OCI-LY7 (cell line): ENCODE measurements at regions of chr12 and their contacts with region 1.

Region 1: GRCh38 chr12:114998118-114998749 is 314.3 kb upstream of the TBX3 start:
- DNase-seq: no peak
- H3K4me3 ChIP-seq: no peak overlapping the region
- H3K27ac ChIP-seq: no peak overlapping the region
- H3K4me1 ChIP-seq: peaks cover 47% of the 10 kb centered on the region
- CTCF ChIP-seq: no peak

Region 2: GRCh38 chr12:114982760-114983159 is 15.5 kb before region 1 on chr12:
- CTCF ChIA-PET with region 1: no interaction called
- POLR2A ChIA-PET with region 1: no interaction called
- intact Hi-C with region 1: no loop called
- DNase-seq: no peak
- H3K4me3 ChIP-seq: no peak overlapping the region
- H3K27ac ChIP-seq: no peak overlapping the region
- H3K4me1 ChIP-seq: no peaks in the 10 kb centered on the region
- CTCF ChIP-seq: no peak

Region 3: DNA sequence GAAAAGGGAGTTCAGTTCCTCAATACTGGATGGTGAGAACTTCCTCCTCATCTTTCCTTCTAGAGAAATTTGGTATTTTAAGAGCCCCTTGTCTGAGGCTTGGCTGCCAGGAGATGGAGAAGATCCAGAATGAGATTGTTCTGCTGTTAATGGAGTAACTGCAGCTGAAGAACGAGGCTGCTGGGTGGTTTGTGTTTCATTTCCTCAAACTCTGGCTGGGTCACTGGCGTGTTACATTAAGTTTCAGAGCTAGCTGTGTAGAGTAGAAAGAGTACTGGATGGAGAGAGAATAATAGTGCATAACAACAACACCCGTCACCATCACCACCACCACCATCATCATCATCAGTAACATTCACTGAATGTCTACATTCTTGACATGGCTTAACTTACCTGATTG is 10.7 kb after region 1 on chr12:
- CTCF ChIA-PET with region 1: interaction called, 3 read pairs
- POLR2A ChIA-PET with region 1: interaction called, 10 read pairs
- intact Hi-C with region 1: no loop called
- DNase-seq: peak; percentile 85
- H3K4me3 ChIP-seq: peak overlapping the region; percentile 31
- H3K27ac ChIP-seq: peak overlapping the region; percentile 64
- H3K4me1 ChIP-seq: peaks cover 45% of the 10 kb centered on the region
- CTCF ChIP-seq: no peak

Region 4: GRCh38 chr12:115096588-115097397 is 98.6 kb after region 1 on chr12:
- CTCF ChIA-PET with region 1: no interaction called
- POLR2A ChIA-PET with region 1: no interaction called
- intact Hi-C with region 1: no loop called
- DNase-seq: no peak
- H3K4me3 ChIP-seq: no peak overlapping the region
- H3K27ac ChIP-seq: no peak overlapping the region
- H3K4me1 ChIP-seq: no peaks in the 10 kb centered on the region
- CTCF ChIP-seq: no peak